MCF 10A (cell line): ENCODE measurements at regions of chr3 and their contacts with region 1.

Region 1: DNA sequence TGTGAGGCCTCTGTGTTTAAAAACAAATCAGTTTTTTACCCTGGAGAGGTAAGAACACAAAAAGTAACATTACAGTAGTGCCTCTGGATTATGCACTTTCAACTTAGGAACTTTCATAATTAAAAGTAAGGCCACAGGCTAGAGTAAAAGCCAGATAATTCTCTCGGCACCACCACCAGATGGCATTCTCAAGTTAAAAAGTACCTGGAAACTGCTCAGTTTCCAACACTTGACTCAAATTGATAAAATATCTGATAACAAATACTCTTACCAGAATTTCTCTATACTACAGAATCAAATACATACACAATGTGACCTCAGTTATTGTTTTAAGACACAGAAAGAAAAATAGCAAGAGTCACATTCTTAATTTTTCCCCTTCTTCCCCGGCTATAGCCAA is 19.9 kb downstream of the SPICE1 start:
- DNase-seq: peak; percentile 39
- H3K4me3 Mint-ChIP-seq: no peak overlapping the region
- H3K27ac Mint-ChIP-seq: no peak overlapping the region
- H3K4me1 Mint-ChIP-seq: no peaks in the 10 kb centered on the region
- H3K27me3 Mint-ChIP-seq: no peaks in the 10 kb centered on the region
- CTCF ChIP-seq: peak; percentile 39

Region 2: GRCh38 chr3:113051302-113051711 is 443.7 kb before region 1 on chr3:
- CTCF ChIA-PET with region 1: no interaction called
- POLR2A ChIA-PET with region 1: no interaction called
- intact Hi-C with region 1: loop called (anchors 5 kb)
- DNase-seq: peak; percentile 80
- H3K4me3 Mint-ChIP-seq: no peak overlapping the region
- H3K27ac Mint-ChIP-seq: no peak overlapping the region
- H3K4me1 Mint-ChIP-seq: no peaks in the 10 kb centered on the region
- H3K27me3 Mint-ChIP-seq: no peaks in the 10 kb centered on the region
- CTCF ChIP-seq: peak; percentile 85

Region 3: DNA sequence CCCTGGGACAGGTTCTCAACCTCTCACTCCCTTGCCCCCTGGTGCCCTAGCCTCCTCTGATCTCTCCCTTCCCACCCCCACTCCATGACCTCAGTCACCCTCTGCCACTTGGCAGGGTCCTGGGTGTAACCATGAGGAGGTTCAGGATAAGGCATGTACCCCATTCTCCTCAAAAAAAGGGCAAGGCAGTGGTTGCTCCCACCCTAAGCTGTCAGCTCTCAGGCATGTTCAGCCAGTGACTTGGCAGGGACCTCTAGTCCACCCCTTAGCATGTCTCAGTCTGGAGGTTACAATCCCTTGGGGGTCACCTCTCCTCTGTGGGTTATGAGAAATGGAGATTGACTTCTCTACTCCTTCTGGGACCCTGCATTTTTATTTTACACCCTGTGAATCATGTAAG is 294.7 kb before region 1 on chr3:
- CTCF ChIA-PET with region 1: no interaction called
- POLR2A ChIA-PET with region 1: no interaction called
- intact Hi-C with region 1: no loop called
- DNase-seq: no peak
- H3K4me3 Mint-ChIP-seq: no peak overlapping the region
- H3K27ac Mint-ChIP-seq: no peak overlapping the region
- H3K4me1 Mint-ChIP-seq: no peaks in the 10 kb centered on the region
- H3K27me3 Mint-ChIP-seq: no peaks in the 10 kb centered on the region
- CTCF ChIP-seq: no peak

Region 4: DNA sequence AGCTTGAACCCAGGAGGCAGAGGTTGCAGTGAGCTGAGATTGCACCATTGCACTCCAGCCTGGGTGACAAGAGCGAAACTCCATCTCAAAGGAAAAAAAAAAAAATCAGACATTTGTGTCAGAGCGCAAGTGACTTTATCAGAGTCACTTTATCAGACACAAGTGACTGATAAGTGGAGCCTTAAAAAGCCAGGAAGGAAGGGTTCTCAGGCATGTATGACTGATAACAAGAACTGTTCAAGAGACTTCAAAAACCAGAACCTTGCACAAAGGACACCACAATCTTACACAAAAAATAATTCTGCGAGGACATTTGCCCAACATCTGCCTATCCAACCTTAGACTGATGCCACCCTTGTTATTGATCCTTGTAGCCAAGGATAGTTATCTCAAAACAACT is 40.4 kb before region 1 on chr3:
- CTCF ChIA-PET with region 1: no interaction called
- POLR2A ChIA-PET with region 1: no interaction called
- intact Hi-C with region 1: no loop called
- DNase-seq: no peak
- H3K4me3 Mint-ChIP-seq: no peak overlapping the region
- H3K27ac Mint-ChIP-seq: no peak overlapping the region
- H3K4me1 Mint-ChIP-seq: no peaks in the 10 kb centered on the region
- H3K27me3 Mint-ChIP-seq: no peaks in the 10 kb centered on the region
- CTCF ChIP-seq: no peak

Region 5: GRCh38 chr3:113514265-113514769 is 19.3 kb after region 1 on chr3:
- CTCF ChIA-PET with region 1: interaction called, 25 read pairs
- POLR2A ChIA-PET with region 1: interaction called, 8 read pairs
- intact Hi-C with region 1: no loop called
- DNase-seq: no peak
- H3K4me3 Mint-ChIP-seq: no peak overlapping the region
- H3K27ac Mint-ChIP-seq: no peak overlapping the region
- H3K4me1 Mint-ChIP-seq: peaks cover 5% of the 10 kb centered on the region
- H3K27me3 Mint-ChIP-seq: peaks cover 9% of the 10 kb centered on the region
- CTCF ChIP-seq: no peak

Region 6: GRCh38 chr3:113575206-113575605 is 80.2 kb after region 1 on chr3:
- CTCF ChIA-PET with region 1: interaction called, 60 read pairs
- POLR2A ChIA-PET with region 1: interaction called, 3 read pairs
- intact Hi-C with region 1: loop called (anchors 1 kb)
- DNase-seq: no peak
- H3K4me3 Mint-ChIP-seq: no peak overlapping the region
- H3K27ac Mint-ChIP-seq: no peak overlapping the region
- H3K4me1 Mint-ChIP-seq: no peaks in the 10 kb centered on the region
- H3K27me3 Mint-ChIP-seq: peaks cover 27% of the 10 kb centered on the region
- CTCF ChIP-seq: no peak

Region 7: GRCh38 chr3:113614402-113614801 is 119.4 kb after region 1 on chr3:
- CTCF ChIA-PET with region 1: interaction called, 10 read pairs
- POLR2A ChIA-PET with region 1: no interaction called
- intact Hi-C with region 1: no loop called
- DNase-seq: no peak
- H3K4me3 Mint-ChIP-seq: no peak overlapping the region
- H3K27ac Mint-ChIP-seq: no peak overlapping the region
- H3K4me1 Mint-ChIP-seq: no peaks in the 10 kb centered on the region
- H3K27me3 Mint-ChIP-seq: no peaks in the 10 kb centered on the region
- CTCF ChIP-seq: no peak